ENCODE measurements at regions of chr15 and their contacts with region 1.

Region 1: DNA sequence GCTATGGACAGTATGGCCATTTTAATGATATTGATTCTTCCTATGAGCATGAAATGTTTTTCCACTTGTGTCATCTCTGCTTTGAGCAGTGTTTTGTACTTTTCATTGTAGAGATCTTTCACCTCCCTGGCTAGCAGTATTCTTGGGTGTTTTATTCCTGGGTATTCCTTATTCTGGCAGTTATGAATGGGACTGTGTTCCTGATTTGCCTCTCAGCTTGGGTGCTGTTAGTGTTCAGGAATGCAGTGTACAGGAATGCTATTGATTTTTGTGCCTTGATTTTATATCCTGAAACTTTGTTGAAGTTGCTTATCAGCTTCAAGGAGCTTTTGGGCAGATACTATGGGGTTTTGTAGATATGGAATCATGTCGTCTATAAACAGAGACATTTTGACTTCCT is 49.5 kb upstream of the CTXND1 start:
- DNase-seq: no peak
- ATAC-seq: no peak
- H3K4me3 ChIP-seq: no peak overlapping the region
- H3K27ac ChIP-seq: no peak overlapping the region
- H3K4me1 ChIP-seq: no peaks in the 10 kb centered on the region
- H3K27me3 ChIP-seq: no peaks in the 10 kb centered on the region
- CTCF ChIP-seq: no peak
- POLR2A ChIP-seq: no peak
- RAD21 ChIP-seq: no peak

Region 2: GRCh38 chr15:80251428-80252120 is 49.9 kb before region 1 on chr15:
- CTCF ChIA-PET with region 1: no interaction called
- POLR2A ChIA-PET with region 1: no interaction called
- RAD21 ChIA-PET with region 1: no interaction called
- intact Hi-C with region 1: loop called (anchors 5 kb)
- DNase-seq: no peak
- ATAC-seq: no peak
- H3K4me3 ChIP-seq: no peak overlapping the region
- H3K27ac ChIP-seq: no peak overlapping the region
- H3K4me1 ChIP-seq: no peaks in the 10 kb centered on the region
- H3K27me3 ChIP-seq: peaks cover 63% of the 10 kb centered on the region
- CTCF ChIP-seq: no peak
- POLR2A ChIP-seq: no peak
- RAD21 ChIP-seq: no peak

Measured in HCT116 (cell line).